HepG2 (cell line): ENCODE measurements at regions of chr2 and their contacts with region 1.

Region 1: DNA sequence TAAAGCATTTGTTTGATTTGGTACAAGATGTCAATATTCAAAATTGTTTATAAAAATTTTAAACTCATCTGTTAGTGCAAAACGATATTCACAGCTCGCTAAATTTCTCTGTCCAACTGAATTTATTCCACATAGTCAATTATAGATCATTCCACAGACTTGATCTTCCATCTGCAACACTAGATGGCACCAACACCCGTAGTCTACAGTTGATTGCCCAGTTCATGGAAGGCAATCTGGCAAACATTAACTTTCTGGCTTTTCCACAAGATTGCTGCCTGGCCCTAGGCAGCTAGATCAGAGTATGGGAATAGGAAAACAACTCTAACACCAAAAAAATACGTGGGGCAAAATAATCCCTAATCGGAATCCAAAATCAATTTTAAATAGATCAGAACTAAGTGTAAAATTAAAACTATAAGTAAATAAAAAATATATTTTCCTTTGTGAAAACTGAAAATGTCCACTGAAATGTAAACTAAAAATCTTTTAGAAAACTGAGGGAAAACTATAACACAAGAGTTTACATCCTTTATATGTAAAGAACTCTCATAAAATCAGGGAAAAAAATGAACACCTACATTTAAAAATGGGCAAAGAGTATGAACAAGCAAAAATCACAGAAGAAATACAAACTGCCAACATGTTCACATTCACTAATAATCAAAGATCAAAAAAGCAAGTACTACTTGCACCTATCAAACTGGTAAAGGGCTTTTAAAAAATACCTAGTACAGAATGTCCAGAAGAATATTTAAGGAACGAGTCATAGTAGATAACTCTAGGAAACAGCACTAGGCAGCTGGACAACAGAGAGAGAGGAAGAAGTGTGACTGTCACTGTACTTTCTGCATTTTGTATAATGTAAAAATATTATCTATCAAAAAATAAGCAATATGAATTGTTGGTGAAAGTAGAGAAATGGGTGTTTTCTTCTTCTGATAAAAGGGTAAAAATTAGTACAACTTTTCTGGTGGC is 35.0 kb downstream of the RTN4 start:
- DNase-seq: peak; percentile 91
- ATAC-seq: peak; percentile 98
- H3K4me3 ChIP-seq: peak overlapping the region in 2 of 3 experiments; percentile 10 to 13; a peak in 2 of 6 replicates
- H3K27ac ChIP-seq: peak overlapping the region; percentile 13
- H3K4me1 ChIP-seq: peaks cover 67% of the 10 kb centered on the region
- H3K27me3 ChIP-seq: no peaks in the 10 kb centered on the region
- CTCF ChIP-seq: peak; percentile 92
- EP300 ChIP-seq: no peak
- POLR2A ChIP-seq: no peak
- RAD21 ChIP-seq: peak; percentile 86

Region 2: GRCh38 chr2:54899576-54900200 is 115.6 kb before region 1 on chr2:
- CTCF ChIA-PET with region 1: no interaction called
- POLR2A ChIA-PET with region 1: no interaction called
- in situ Hi-C with region 1: no loop called
- intact Hi-C with region 1: loop called (anchors 2 kb)
- DNase-seq: peak; percentile 55
- ATAC-seq: peak; percentile 81
- H3K4me3 ChIP-seq: no peak overlapping the region
- H3K27ac ChIP-seq: no peak overlapping the region
- H3K4me1 ChIP-seq: peaks cover 18% of the 10 kb centered on the region
- H3K27me3 ChIP-seq: no peaks in the 10 kb centered on the region
- CTCF ChIP-seq: peak; percentile 72
- EP300 ChIP-seq: no peak
- POLR2A ChIP-seq: no peak
- RAD21 ChIP-seq: peak; percentile 63

Region 3: DNA sequence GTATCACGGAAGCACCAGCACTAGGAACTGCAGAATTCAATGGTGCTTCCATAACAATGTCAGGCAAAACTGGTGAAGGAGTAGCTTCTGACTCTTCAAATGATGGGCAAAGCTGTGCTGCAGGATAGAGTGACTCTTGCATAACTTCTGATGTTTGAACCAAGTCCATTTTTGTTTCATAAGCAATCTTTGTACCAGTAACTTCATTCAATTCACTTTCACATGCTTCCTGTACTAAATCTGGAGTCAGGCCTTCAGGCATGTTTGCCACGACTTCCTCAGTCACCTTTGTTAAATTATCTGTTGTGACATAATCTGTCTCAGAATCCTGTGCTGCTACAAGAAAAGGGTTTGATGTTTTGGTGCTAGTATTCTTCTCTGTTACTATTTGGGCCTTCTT is 11.0 kb after region 1 on chr2:
- CTCF ChIA-PET with region 1: no interaction called
- POLR2A ChIA-PET with region 1: no interaction called
- in situ Hi-C with region 1: no loop called
- intact Hi-C with region 1: loop called (anchors 2 kb)
- DNase-seq: peak; percentile 81
- ATAC-seq: peak; percentile 89
- H3K4me3 ChIP-seq: no peak overlapping the region
- H3K27ac ChIP-seq: peak overlapping the region; percentile 57
- H3K4me1 ChIP-seq: peaks cover 61% of the 10 kb centered on the region
- H3K27me3 ChIP-seq: no peaks in the 10 kb centered on the region
- CTCF ChIP-seq: no peak
- EP300 ChIP-seq: peak in 1 of 2 experiments; percentile 45; a peak in 1 of 4 replicates
- POLR2A ChIP-seq: no peak
- RAD21 ChIP-seq: 0 out of 2 replicates have a peak, but pooled peaks have one; percentile 14

Region 4: DNA sequence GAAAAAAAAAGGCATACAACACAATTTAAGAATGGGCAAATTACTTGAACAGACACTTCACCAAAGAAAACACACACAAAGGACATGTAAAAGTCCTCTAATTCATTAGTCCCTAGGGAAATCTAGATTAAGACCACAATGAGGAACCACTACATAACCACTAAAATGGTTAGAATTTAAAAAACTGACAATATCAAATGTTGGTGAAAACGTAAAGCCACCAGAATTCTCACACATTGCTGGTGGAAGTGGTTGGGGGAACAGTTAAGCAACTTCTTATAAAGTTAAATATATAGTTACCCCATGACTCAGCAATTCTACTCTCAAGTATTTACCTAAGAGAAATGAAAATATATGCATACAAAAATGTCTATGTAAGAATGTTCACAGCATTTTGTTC is 23.2 kb after region 1 on chr2:
- CTCF ChIA-PET with region 1: no interaction called
- POLR2A ChIA-PET with region 1: no interaction called
- in situ Hi-C with region 1: no loop called
- intact Hi-C with region 1: no loop called
- DNase-seq: no peak
- ATAC-seq: no peak
- H3K4me3 ChIP-seq: no peak overlapping the region
- H3K27ac ChIP-seq: no peak overlapping the region
- H3K4me1 ChIP-seq: peaks cover 38% of the 10 kb centered on the region
- H3K27me3 ChIP-seq: no peaks in the 10 kb centered on the region
- CTCF ChIP-seq: no peak
- EP300 ChIP-seq: no peak
- POLR2A ChIP-seq: no peak
- RAD21 ChIP-seq: no peak

Region 5: GRCh38 chr2:55111570-55112228 is 96.4 kb after region 1 on chr2:
- CTCF ChIA-PET with region 1: no interaction called
- POLR2A ChIA-PET with region 1: no interaction called
- in situ Hi-C with region 1: no loop called
- intact Hi-C with region 1: loop called (anchors 5 kb)
- DNase-seq: peak; percentile 68
- ATAC-seq: peak; percentile 72
- H3K4me3 ChIP-seq: peak overlapping the region; percentile 3 to 58 (median 39); a peak in 4 of 6 replicates
- H3K27ac ChIP-seq: no peak overlapping the region
- H3K4me1 ChIP-seq: peaks cover 72% of the 10 kb centered on the region
- H3K27me3 ChIP-seq: peaks cover 0 to 12% of the 10 kb centered on the region in 2 experiments; a peak in 3 of 5 replicates
- CTCF ChIP-seq: no peak
- EP300 ChIP-seq: 0 out of 4 replicates have a peak, but pooled peaks of 1 of the 2 experiments have one; percentile 25
- POLR2A ChIP-seq: no peak
- RAD21 ChIP-seq: no peak

Region 6: DNA sequence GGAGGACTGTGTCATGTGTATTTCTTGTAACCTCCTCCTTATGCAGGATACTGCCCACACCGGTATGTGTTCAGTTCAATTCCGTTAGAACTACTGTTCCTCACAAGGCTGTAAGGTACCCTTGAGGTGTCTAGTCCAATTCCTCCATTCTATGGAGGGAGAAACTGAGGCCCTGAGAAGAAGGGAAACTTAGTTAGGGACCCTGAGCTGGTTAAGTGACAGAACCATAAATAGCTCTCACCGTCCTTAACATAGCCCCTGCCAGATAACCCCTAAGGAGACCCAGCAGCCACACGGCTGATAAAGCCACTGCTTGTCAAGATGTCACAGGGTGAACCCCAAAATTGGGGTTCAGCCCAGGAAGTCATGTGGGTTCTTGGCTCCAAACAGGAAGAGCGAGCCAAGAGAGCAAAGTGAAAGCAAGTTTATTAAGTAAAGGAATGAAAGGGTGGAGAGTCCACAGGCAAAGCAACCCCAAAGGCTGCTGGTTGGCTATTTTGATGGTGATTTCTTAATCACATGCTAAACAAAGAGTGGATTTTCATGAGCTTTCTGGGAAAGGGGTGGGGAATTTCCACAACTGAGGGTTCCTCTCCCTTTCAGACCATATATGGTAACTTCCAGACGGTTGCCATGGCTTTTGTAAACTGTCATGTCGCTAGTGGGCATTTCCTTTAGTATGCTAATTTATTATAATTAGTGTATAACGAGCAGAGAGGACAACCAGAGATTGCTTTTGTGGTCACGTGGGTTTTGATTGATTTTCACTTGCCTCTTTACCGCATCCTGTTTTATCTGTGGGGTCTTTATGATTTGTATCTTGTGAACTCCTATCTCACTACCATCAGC is 118.4 kb after region 1 on chr2:
- CTCF ChIA-PET with region 1: no interaction called
- POLR2A ChIA-PET with region 1: no interaction called
- in situ Hi-C with region 1: no loop called
- intact Hi-C with region 1: no loop called
- DNase-seq: peak; percentile 81
- ATAC-seq: peak; percentile 43
- H3K4me3 ChIP-seq: peak overlapping the region; percentile 13 to 46 (median 40)
- H3K27ac ChIP-seq: no peak overlapping the region
- H3K4me1 ChIP-seq: peaks cover 53% of the 10 kb centered on the region
- H3K27me3 ChIP-seq: peaks cover 1 to 15% of the 10 kb centered on the region in 2 experiments; a peak in 2 of 5 replicates
- CTCF ChIP-seq: no peak
- EP300 ChIP-seq: no peak
- POLR2A ChIP-seq: no peak; a peak in 1 of 4 replicates
- RAD21 ChIP-seq: no peak

Region 7: GRCh38 chr2:55157474-55157884 is 142.2 kb after region 1 on chr2:
- CTCF ChIA-PET with region 1: no interaction called
- POLR2A ChIA-PET with region 1: no interaction called
- in situ Hi-C with region 1: no loop called
- intact Hi-C with region 1: no loop called
- DNase-seq: no peak
- ATAC-seq: peak; percentile 49
- H3K4me3 ChIP-seq: no peak overlapping the region
- H3K27ac ChIP-seq: no peak overlapping the region
- H3K4me1 ChIP-seq: peaks cover 54% of the 10 kb centered on the region
- H3K27me3 ChIP-seq: peaks cover 2 to 61% of the 10 kb centered on the region in 2 experiments; a peak in 4 of 5 replicates
- CTCF ChIP-seq: no peak
- EP300 ChIP-seq: no peak
- POLR2A ChIP-seq: no peak
- RAD21 ChIP-seq: no peak

Region 8: DNA sequence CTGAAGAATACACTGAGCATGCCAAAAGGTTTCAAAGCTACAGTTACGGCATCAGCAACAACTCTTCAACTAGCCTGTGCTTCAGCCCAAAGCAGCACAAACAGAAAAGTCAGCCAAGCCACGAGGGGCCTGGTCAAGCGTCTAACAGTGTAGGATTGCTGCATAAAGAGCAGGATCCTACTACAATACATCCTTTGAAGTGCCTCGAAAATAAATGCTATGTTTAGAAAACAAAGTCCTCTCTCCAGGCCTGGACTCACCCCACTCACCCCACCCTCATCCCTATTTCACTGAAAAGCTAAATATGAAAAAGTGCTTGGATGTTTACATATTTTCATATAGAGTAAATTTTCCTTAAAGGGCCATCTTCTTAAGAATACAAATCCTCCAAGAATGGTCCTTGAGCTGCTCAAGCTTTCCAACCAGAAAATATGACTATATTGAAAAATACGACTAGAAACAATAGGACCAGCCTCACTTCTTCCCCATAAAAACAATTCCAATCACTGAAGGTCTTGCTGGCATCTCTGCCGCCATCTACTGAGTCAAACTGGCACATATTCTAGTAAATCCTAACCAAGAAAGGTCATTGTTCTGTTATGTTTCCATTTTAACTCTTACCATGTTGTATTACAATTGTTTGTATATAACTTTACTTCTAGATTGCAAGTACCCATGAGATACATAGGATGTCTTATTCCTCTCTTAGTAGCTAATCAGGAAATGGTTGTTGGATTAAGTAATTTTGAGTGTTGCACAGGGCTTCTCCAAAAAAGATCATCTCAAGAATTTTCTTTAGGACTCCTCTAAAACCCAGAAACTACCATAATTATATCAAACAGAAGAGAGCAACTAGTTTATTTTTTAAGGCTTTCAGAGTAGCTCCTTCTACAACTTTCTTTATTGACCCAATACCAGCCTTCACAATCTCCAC is 153.2 kb after region 1 on chr2:
- CTCF ChIA-PET with region 1: interaction called, 34 read pairs
- POLR2A ChIA-PET with region 1: no interaction called
- in situ Hi-C with region 1: loop called (anchors 5 kb)
- intact Hi-C with region 1: loop called (anchors 1 kb)
- DNase-seq: peak; percentile 70
- ATAC-seq: peak; percentile 78
- H3K4me3 ChIP-seq: peak overlapping the region in 2 of 3 experiments; percentile 5 to 30; a peak in 3 of 6 replicates
- H3K27ac ChIP-seq: no peak overlapping the region
- H3K4me1 ChIP-seq: peaks cover 31% of the 10 kb centered on the region
- H3K27me3 ChIP-seq: peaks cover 0 to 6% of the 10 kb centered on the region in 2 experiments; a peak in 2 of 5 replicates
- CTCF ChIP-seq: peak; percentile 86
- EP300 ChIP-seq: no peak
- POLR2A ChIP-seq: no peak
- RAD21 ChIP-seq: peak; percentile 83

Region 9: DNA sequence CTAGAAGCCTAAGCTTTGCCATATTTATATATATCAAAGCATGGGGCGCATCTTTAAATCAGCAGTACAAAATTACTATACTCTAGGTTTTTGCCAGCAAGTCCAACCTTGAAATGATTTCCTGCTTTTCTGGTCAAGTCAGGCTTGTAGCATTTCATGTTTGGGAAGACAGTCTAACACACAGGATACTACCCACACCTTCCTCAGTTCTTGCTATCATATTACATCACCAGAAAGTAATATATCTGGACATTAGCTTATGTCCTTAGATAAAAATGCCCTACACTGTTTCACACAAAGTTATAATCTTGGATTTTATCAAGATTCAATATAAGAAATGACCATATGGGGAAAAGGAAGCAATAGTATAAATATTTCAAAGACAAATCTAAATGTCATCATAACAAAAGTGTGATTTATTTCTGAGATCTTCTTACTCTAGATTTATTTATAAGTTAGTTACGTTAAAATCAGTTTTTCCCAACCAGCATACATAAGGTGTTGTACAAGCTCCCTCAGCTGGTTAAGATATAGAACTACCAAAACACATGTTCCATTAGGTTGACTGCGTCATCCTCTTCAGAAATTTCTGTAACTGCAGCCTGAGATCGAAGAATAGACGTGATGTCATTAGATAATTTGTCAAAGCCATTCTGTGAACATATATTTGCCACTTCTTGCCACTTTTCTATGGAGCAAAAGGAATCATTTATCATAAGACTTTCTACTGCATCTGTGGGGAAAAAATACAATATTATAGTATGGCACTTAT is 160.2 kb after region 1 on chr2:
- CTCF ChIA-PET with region 1: interaction called, 34 read pairs
- POLR2A ChIA-PET with region 1: no interaction called
- in situ Hi-C with region 1: no loop called
- intact Hi-C with region 1: no loop called
- DNase-seq: peak; percentile 41
- ATAC-seq: peak; percentile 68; the same call in 2 of the 3 replicates
- H3K4me3 ChIP-seq: no peak overlapping the region
- H3K27ac ChIP-seq: no peak overlapping the region
- H3K4me1 ChIP-seq: peaks cover 7% of the 10 kb centered on the region
- H3K27me3 ChIP-seq: no peaks in the 10 kb centered on the region
- CTCF ChIP-seq: peak; percentile 65
- EP300 ChIP-seq: no peak
- POLR2A ChIP-seq: no peak
- RAD21 ChIP-seq: peak; percentile 45

Region 10: GRCh38 chr2:55196506-55196905 is 181.3 kb after region 1 on chr2:
- CTCF ChIA-PET with region 1: no interaction called
- POLR2A ChIA-PET with region 1: no interaction called
- in situ Hi-C with region 1: no loop called
- intact Hi-C with region 1: no loop called
- DNase-seq: no peak
- ATAC-seq: no peak
- H3K4me3 ChIP-seq: no peak overlapping the region
- H3K27ac ChIP-seq: no peak overlapping the region
- H3K4me1 ChIP-seq: no peaks in the 10 kb centered on the region
- H3K27me3 ChIP-seq: no peaks in the 10 kb centered on the region
- CTCF ChIP-seq: no peak
- EP300 ChIP-seq: no peak
- POLR2A ChIP-seq: no peak
- RAD21 ChIP-seq: no peak

Region 11: GRCh38 chr2:55232084-55232862 is 217.0 kb after region 1 on chr2 and contains the starts of genes CLHC1 and RPS27A:
- CTCF ChIA-PET with region 1: no interaction called
- POLR2A ChIA-PET with region 1: interaction called, 3 read pairs
- in situ Hi-C with region 1: no loop called
- intact Hi-C with region 1: loop called (anchors 1 kb)
- DNase-seq: peak; percentile 99
- ATAC-seq: peak; percentile 96
- H3K4me3 ChIP-seq: peak within 1 kb of the TSS; percentile 82 to 95 (median 93)
- H3K27ac ChIP-seq: peak within 1 kb of the TSS; percentile 98
- H3K4me1 ChIP-seq: peaks cover 59% of the 10 kb centered on the region
- H3K27me3 ChIP-seq: no peaks in the 10 kb centered on the region; a peak in 1 of 5 replicates
- CTCF ChIP-seq: no peak
- EP300 ChIP-seq: 0 out of 4 replicates have a peak, but pooled peaks of 1 of the 2 experiments have one; percentile 28
- POLR2A ChIP-seq: peak; percentile 98
- RAD21 ChIP-seq: peak; percentile 50
- total RNA-seq, gene CLHC1: 12.1 and 12.6 TPM in 2 replicates
- total RNA-seq, gene RPS27A: 2,779 and 3,447 TPM in 2 replicates